ENCODE measurements at regions of chr14 and their contacts with region 1.

Region 1: DNA sequence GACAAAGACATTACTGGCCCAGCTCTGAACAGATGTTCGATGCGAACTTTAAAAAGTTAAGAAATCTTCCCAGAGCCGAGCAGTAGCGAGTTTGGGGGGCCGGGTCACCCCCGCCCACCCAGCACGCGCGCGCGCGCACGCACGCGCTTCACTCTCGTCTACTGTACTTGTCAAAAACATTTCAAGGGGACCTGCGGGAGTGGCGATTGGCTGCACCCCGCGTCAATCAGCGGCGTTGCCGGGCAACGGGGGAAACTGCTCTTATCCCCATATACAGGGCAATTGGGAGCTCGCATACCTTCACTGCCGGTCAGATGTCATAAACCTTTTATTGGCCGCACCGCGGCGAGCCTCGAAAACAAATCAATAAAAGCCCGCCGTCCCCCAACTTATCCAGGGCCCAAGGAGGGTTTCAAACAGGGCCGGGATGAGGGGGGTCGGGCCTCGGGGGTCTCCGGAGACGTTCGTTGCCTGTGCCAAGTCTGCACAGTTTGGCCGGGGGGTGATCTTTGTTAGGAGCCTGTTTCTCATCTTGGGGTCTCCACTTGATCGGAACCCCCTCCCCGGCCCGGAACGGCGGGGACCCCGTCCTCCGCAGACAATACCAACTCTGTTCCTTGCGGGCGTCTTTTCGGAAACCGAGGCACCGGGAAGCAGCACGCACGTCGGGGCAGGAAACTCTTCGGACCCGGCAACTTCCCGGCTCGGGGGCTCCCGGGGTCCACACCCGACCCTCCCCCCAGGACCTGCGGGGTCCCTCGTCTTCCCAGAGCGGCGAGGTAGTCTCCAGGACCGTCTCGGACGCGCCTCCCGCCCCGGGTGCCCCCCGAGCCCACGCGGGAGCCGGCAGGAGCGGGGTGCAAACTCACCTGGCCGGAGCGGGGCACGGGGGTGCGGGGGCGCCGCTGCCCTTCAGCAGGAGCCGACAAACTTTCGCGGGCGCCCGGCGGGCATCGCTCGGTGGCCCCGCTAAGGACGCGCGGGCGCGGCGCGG is 734 bp downstream of the FOXN3 start:
- DNase-seq: peak; percentile 99 to 100 (median 99)
- ATAC-seq: peak; percentile 84
- H3K4me3 ChIP-seq: peak overlapping the region; percentile 87
- H3K4me1 ChIP-seq: peaks cover 25% of the 10 kb centered on the region
- CTCF ChIP-seq: no peak

Region 2: DNA sequence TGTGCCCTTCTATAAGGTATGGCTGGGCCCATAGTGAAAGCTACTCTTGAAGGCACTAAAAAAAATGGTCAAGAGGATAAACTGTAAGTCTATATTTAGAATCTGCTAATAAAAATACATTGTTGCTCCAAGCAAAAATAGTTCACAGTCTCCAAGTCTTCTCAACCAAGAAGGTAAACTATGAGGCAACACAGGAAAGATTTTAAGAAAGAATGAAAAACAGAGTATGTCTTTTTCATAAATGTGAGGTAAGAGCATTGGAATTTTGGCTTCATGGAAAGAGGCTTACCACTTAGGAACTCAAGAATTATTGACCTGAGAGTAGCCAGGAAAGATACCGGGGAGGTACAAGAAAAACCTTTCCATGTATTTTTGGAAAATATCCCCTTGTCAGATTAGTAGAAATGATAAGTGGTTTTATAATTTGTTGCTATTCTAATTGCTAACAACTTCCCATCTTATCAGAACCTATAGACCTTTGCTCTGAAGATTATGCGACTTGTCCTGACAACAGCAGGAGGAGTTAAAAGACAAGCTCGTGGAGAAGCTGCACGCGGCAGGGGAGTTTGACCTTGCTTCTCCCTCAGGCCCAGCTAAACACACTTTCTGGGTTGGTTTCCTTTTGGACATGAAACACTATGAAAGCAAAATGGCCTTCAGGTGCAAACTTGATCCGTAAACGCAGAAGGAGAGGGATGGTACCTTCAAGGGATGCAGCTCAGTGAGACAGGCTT is 237.3 kb before region 1 on chr14:
- intact Hi-C with region 1: loop called (anchors 2 to 10 kb)
- DNase-seq: no peak
- ATAC-seq: no peak
- H3K4me3 ChIP-seq: no peak overlapping the region
- H3K4me1 ChIP-seq: peaks cover 7% of the 10 kb centered on the region
- CTCF ChIP-seq: no peak

Region 3: GRCh38 chr14:89365061-89365801 is 51.1 kb before region 1 on chr14:
- intact Hi-C with region 1: loop called in 1 of 2 experiments (anchors 10 kb)
- DNase-seq: peak in 1 of 3 donors; percentile 55
- ATAC-seq: peak; percentile 47
- H3K4me3 ChIP-seq: no peak overlapping the region
- H3K4me1 ChIP-seq: peaks cover 42% of the 10 kb centered on the region
- CTCF ChIP-seq: no peak